ENCODE measurements at regions of chr16 and their contacts with region 1.

Region 1: DNA sequence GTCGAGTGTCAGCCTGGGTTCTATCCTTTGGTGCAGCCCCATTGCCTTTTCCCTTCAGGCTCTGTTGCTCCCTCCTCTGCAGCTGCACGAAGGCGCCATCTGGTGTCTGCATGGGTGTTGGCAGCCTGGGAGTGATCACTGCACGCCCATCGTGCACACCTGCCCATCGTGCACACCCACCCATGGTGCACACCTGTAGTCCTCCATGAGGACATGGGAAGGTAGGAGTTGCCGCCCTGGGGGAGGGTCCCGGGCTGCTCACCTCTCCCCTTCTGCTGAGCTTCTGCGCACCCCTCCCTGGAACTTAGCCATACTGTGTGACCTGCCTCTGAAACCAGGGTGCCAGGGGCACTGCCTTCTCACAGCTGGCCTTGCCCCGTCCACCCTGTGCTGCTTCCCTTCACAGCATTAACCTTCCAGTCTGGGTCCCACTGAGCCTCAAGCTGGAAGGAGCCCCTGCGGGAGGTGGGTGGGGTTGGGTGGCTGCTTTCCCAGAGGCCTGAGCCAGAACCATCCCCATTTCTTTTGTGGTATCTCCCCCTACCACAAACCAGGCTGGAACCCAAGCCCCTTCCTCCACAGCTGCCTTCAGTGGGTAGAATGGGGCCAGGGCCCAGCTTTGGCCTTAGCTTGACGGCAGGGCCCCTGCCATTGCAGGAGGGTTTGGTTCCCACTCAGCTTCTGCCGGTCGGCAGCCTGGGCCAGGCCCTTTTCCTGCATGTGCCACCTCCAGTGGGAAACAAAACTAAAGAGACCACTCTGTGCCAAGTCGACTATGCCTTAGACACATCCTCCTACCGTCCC is 2.9 kb downstream of the CTRL start:
- DNase-seq: peak; percentile 61 to 84 (median 73)
- ATAC-seq: peak; percentile 97
- H3K4me3 ChIP-seq: no peak overlapping the region
- H3K4me3 Mint-ChIP-seq: no peak overlapping the region
- H3K27ac ChIP-seq: no peak overlapping the region
- H3K27ac Mint-ChIP-seq: peak overlapping the region; percentile 47
- H3K4me1 ChIP-seq: peaks cover 12% of the 10 kb centered on the region
- H3K4me1 Mint-ChIP-seq: peaks cover 9% of the 10 kb centered on the region
- H3K27me3 ChIP-seq: no peaks in the 10 kb centered on the region
- H3K27me3 Mint-ChIP-seq: no peaks in the 10 kb centered on the region
- CTCF ChIP-seq: peak; percentile 82

Region 2: GRCh38 chr16:67672739-67673662 is 255.8 kb before region 1 on chr16:
- CTCF ChIA-PET with region 1: interaction called, 7 read pairs
- POLR2A ChIA-PET with region 1: no interaction called
- intact Hi-C with region 1: loop called in 1 of 2 experiments (anchors 2 kb)
- DNase-seq: peak in 12 of 14 experiments; percentile 31 to 75 (median 50)
- ATAC-seq: peak; percentile 20
- H3K4me3 ChIP-seq: no peak overlapping the region
- H3K4me3 Mint-ChIP-seq: no peak overlapping the region
- H3K27ac ChIP-seq: no peak overlapping the region
- H3K27ac Mint-ChIP-seq: no peak overlapping the region
- H3K4me1 ChIP-seq: peaks cover 10% of the 10 kb centered on the region
- H3K4me1 Mint-ChIP-seq: peaks cover 7% of the 10 kb centered on the region
- H3K27me3 ChIP-seq: no peaks in the 10 kb centered on the region
- H3K27me3 Mint-ChIP-seq: no peaks in the 10 kb centered on the region
- CTCF ChIP-seq: peak; percentile 64

Region 3: DNA sequence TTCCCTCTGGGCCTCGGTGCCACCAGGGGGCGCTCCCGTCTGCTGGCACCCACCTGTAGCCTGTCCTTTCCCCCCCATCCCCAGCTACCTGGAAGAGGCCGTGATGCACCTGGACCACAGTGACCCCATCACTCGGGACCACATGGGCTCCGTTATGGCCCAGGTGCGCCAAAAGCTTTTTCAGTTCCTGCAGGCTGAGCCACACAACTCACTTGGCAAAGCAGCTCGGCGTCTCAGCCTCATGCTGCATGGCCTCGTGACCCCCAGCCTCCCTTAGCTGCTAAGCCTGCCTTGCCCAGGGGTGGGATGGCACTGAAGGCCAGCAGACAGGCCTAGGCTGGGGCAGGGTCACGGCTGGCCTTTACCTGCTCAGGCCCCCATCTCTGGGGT is 44.9 kb before region 1 on chr16:
- CTCF ChIA-PET with region 1: interaction called, 11 read pairs
- POLR2A ChIA-PET with region 1: no interaction called
- intact Hi-C with region 1: loop called in 1 of 2 experiments (anchors 2 kb)
- DNase-seq: peak; percentile 60 to 85 (median 72)
- ATAC-seq: peak; percentile 88
- H3K4me3 ChIP-seq: no peak overlapping the region
- H3K4me3 Mint-ChIP-seq: no peak overlapping the region
- H3K27ac ChIP-seq: no peak overlapping the region
- H3K27ac Mint-ChIP-seq: no peak overlapping the region
- H3K4me1 ChIP-seq: no peaks in the 10 kb centered on the region
- H3K4me1 Mint-ChIP-seq: no peaks in the 10 kb centered on the region
- H3K27me3 ChIP-seq: no peaks in the 10 kb centered on the region
- H3K27me3 Mint-ChIP-seq: no peaks in the 10 kb centered on the region
- CTCF ChIP-seq: peak; percentile 91